Psoas muscle (tissue), 8 donors: ENCODE measurements at regions of chr1 and their contacts with region 1.

Region 1: GRCh38 chr1:109984456-109985275 is at the start of gene AHCYL1:
- DNase-seq: peak; percentile 99 to 100
- ATAC-seq: peak; percentile 94 to 97 (median 96)
- H3K4me3 ChIP-seq: peak within 1 kb of the TSS; percentile 94
- H3K27ac ChIP-seq: peak within 1 kb of the TSS; percentile 98
- H3K4me1 ChIP-seq: peaks cover 51% of the 10 kb centered on the region
- H3K27me3 ChIP-seq: no peaks in the 10 kb centered on the region
- CTCF ChIP-seq: peak; percentile 99
- total RNA-seq, gene AHCYL1: 60.2 to 128 (median 88.9) TPM

Region 2: GRCh38 chr1:109548321-109549267 is 436.1 kb before region 1 on chr1 and contains the start of gene GNAI3:
- intact Hi-C with region 1: loop called (anchors 5 kb)
- DNase-seq: peak; percentile 96 to 98
- ATAC-seq: peak; percentile 97 to 98 (median 98)
- H3K4me3 ChIP-seq: peak within 1 kb of the TSS; percentile 90
- H3K27ac ChIP-seq: peak within 1 kb of the TSS; percentile 95
- H3K4me1 ChIP-seq: peaks cover 30% of the 10 kb centered on the region
- H3K27me3 ChIP-seq: no peaks in the 10 kb centered on the region
- CTCF ChIP-seq: no peak
- total RNA-seq, gene GNAI3: 1.4 to 2.3 (median 1.7) TPM

Region 3: DNA sequence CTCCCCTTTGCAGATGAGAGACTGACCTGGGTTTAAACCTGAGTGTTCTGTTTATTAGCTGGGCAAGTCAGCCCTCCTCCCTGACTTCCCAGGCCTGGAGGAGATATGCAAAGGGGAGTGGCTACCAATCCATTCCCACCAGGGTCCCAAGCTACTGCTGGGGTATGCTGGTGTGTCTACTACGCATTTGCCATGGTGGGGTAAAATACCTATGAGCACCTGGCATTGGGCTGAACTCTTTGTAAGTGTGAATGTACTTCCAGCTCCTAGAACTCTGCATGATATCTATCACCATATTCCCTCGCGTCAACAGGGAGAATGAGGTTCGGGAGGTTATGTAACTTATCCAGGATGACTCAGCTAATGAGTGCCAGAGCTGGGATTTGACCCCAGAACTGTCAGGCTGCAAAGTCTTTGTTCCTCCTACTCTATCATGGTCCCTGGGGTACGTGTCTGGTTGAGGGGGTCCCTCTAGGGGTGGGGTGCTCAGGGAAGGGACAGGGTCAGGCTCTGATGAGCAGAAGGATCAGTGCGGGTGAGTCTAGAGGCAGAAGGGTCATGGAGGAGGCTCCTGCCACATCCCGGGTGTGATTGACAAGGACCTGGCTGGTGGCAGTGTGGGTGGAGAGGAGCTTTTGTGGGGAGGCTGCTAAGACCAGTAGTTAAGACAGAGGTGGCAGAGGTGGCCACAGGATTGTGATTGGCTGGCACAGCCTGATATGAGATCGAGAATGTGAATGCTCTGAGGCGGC is 348.3 kb before region 1 on chr1:
- intact Hi-C with region 1: loop called (anchors 5 kb)
- DNase-seq: no peak
- ATAC-seq: peak in 2 of 4 donors; percentile 12 to 25
- H3K4me3 ChIP-seq: no peak overlapping the region
- H3K27ac ChIP-seq: no peak overlapping the region
- H3K4me1 ChIP-seq: no peaks in the 10 kb centered on the region
- H3K27me3 ChIP-seq: no peaks in the 10 kb centered on the region
- CTCF ChIP-seq: no peak

Region 4: GRCh38 chr1:109643385-109644230 is 341.1 kb before region 1 on chr1:
- intact Hi-C with region 1: loop called (anchors 5 kb)
- DNase-seq: peak; percentile 85 to 93
- ATAC-seq: peak; percentile 93 to 97 (median 94)
- H3K4me3 ChIP-seq: peak overlapping the region; percentile 26
- H3K27ac ChIP-seq: no peak overlapping the region
- H3K4me1 ChIP-seq: no peaks in the 10 kb centered on the region
- H3K27me3 ChIP-seq: no peaks in the 10 kb centered on the region
- CTCF ChIP-seq: peak; percentile 93

Region 5: GRCh38 chr1:109773146-109773899 is 211.3 kb before region 1 on chr1:
- intact Hi-C with region 1: loop called (anchors 1 kb)
- DNase-seq: peak; percentile 80 to 90
- ATAC-seq: peak; percentile 88 to 92 (median 90)
- H3K4me3 ChIP-seq: no peak overlapping the region
- H3K27ac ChIP-seq: no peak overlapping the region
- H3K4me1 ChIP-seq: no peaks in the 10 kb centered on the region
- H3K27me3 ChIP-seq: no peaks in the 10 kb centered on the region
- CTCF ChIP-seq: peak; percentile 87

Region 6: GRCh38 chr1:109910123-109910962 is 74.3 kb before region 1 on chr1 and contains the start of gene CSF1:
- intact Hi-C with region 1: loop called in 1 of 2 experiments (anchors 5 kb)
- DNase-seq: peak; percentile 84 to 89
- ATAC-seq: peak; percentile 74 to 89 (median 82)
- H3K4me3 ChIP-seq: peak within 1 kb of the TSS; percentile 89
- H3K27ac ChIP-seq: peak within 1 kb of the TSS; percentile 71
- H3K4me1 ChIP-seq: peaks cover 12% of the 10 kb centered on the region
- H3K27me3 ChIP-seq: no peaks in the 10 kb centered on the region
- CTCF ChIP-seq: no peak
- total RNA-seq, gene CSF1: 7.9 to 14.7 (median 10.6) TPM

Region 7: DNA sequence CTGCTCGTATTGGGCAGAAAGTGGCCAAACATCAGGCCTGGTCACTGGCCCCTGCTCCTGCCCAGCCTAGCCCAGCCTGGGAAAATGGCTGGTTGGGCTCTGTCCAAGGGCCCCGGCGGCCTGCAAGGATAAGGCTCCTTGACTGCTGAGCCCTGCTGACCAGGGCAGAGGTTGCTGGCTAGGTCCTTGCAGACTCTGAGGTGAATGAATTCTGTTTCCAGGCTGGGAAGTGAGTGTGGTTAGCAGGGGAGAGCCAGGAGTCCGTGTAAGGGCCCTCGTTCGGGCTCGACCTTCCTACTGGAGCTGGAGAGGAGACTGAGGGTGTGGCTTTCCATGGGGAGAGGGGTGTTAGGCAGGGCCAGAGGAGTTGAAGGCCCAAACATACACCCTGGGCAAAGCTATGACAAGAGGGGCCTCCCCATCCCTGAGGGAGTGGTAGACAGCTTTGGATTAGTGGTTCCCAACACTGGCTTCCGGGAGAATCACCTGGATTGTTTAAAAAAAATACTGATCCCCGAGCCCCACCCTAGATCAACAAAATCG is 53.4 kb before region 1 on chr1:
- intact Hi-C with region 1: loop called in 1 of 2 experiments (anchors 5 kb)
- DNase-seq: peak; percentile 86 to 88
- ATAC-seq: peak; percentile 45 to 57 (median 56)
- H3K4me3 ChIP-seq: no peak overlapping the region
- H3K27ac ChIP-seq: peak overlapping the region; percentile 53
- H3K4me1 ChIP-seq: peaks cover 27% of the 10 kb centered on the region
- H3K27me3 ChIP-seq: no peaks in the 10 kb centered on the region
- CTCF ChIP-seq: no peak

Region 8: DNA sequence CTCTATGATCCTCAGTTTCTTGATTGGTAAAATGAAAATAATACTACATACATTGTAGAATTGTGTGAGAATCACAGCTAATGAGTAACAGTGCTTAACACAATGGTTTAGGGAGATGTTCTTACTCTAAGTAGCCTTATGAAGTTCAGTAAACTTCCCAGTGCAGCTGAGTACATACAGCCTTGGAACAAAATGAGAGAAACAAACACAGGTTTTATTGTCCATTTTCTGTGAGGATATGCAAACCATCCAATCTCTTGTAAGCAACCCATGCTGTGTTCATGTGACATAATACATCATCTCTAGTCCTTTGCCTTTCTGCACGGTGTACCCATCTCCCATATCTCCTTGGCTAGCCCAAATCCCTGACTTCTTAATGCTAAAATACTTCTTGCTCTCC is 35.1 kb after region 1 on chr1:
- intact Hi-C with region 1: no loop called
- DNase-seq: no peak
- ATAC-seq: no peak
- H3K4me3 ChIP-seq: no peak overlapping the region
- H3K27ac ChIP-seq: no peak overlapping the region
- H3K4me1 ChIP-seq: no peaks in the 10 kb centered on the region
- H3K27me3 ChIP-seq: no peaks in the 10 kb centered on the region
- CTCF ChIP-seq: no peak

Region 9: DNA sequence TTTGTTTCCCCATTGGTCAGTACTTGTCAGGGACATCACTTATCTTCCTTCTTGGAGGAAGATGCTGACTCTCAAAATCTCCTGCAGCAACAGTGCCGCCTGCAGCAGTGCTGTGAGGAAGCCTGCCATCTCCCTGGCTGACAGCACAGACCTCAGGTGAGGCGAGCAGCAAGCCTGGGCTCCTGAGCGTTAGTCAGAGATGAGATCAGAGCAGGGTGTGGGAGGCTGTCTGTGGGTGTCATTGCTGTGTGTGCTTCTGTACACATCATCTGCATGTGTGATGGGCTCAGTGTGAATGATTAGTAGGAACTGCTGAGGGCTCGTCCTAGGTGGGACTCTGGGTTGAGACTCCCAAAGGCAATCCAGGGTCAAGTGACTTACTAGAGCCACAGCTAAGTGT is 55.9 kb after region 1 on chr1:
- intact Hi-C with region 1: no loop called
- DNase-seq: no peak
- ATAC-seq: no peak
- H3K4me3 ChIP-seq: no peak overlapping the region
- H3K27ac ChIP-seq: no peak overlapping the region
- H3K4me1 ChIP-seq: peaks cover 6% of the 10 kb centered on the region
- H3K27me3 ChIP-seq: no peaks in the 10 kb centered on the region
- CTCF ChIP-seq: no peak